ENCODE measurements at regions of chr9 and their contacts with region 1.

Region 1: DNA sequence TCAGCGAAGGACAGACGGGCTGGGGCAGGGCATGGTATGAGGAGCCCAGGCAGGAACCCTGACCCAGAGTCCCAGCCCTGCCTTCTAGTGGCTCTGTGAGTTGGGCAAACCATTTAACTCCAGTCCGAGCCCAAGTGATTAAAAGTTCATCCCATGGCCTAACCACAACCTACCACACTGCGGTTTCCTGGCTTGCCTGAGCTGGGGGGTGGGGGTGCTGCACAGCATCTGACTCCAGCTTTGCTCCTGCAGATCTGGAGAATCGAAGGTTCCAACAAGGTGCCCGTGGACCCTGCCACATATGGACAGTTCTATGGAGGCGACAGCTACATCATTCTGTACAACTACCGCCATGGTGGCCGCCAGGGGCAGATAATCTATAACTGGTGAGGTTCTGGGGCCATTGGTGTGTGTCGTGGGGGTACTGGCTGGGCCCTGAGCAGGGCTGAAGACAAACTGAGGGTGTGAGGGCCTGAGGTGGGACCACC is 49.0 kb downstream of the STOM start:
- DNase-seq: no peak
- ATAC-seq: no peak

Region 2: DNA sequence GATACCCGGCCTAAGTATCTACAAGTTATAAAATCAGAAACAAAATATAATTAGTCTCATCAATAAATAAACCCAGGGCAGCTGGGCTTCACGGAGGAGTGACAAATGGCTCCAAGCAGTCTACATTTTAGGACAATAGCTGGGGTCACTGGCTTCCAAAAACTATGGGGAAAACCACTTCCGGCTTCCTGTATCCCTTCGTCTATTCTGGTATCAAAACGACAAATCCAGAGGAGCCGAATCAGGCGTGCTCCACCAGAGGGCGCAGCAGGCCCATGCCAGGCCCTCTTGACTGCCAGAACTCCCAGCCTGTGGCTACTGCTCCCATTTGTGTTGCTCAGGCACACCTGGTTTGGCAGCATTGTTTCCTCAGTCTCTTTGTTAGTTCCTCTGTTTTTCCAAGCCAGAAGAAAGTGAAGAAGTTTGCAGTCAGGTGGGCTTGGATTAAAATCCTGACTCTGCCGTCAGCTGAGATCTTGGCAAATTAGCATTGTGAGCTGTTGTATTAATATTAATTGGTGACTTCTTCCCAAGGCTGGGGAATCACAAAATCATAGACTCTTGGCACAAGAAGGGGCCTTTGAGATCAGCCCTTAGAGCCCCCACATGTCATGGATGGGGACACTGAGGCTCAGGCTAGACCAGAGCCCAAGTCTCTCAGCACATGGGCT is 107.8 kb before region 1 on chr9:
- intact Hi-C with region 1: loop called (anchors 5 kb)
- DNase-seq: peak; percentile 92
- ATAC-seq: peak; percentile 89

Region 3: GRCh38 chr9:121267689-121268597 is 53.1 kb before region 1 on chr9 and contains the start of gene GSN:
- intact Hi-C with region 1: loop called (anchors 5 kb)
- DNase-seq: peak; percentile 93
- ATAC-seq: peak; percentile 85
- total RNA-seq, gene GSN: 966 TPM

Region 4: DNA sequence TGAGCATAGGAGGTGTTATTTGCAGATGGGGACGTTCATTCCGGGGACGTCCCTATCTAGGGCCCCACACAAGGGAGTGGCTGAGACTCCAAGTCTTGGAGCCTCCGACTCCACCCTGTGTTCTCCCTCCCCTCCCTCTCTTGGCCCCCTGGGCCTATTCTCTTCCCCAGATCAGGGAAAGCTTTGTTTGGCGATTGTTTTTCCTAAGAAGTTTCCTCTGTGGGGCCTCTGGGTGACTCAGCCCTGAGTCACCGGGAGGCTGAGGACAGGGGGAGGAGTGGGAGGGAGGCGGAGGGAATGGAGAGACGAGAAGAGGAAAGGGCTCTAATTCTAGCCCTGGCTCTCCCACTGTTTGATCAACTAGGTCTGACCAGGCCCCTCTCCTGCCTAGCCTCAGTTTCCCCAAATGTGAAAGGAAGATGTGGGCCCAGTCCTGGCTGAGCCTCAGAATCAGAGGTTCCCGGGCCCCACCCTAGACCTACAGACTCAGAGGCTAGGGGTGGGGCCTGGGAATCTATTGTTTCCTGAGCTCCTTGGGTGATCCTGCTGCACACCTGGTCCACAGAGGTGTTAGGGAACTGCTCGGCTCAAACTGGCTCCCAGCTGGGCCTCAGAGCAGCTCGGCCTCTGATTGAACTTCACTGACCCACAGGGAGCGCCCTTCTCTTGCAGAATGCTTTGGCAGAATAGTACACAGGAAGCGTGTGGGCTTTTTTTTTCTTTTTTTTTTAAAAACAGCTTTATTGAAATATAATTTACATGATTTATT is 33.9 kb before region 1 on chr9:
- intact Hi-C with region 1: loop called (anchors 2 kb)
- DNase-seq: peak; percentile 89
- ATAC-seq: peak; percentile 71

Region 5: GRCh38 chr9:121399883-121400607 is 79.0 kb after region 1 on chr9:
- intact Hi-C with region 1: loop called (anchors 2 kb)
- DNase-seq: no peak
- ATAC-seq: no peak